ENCODE measurements at regions of chr10 and their contacts with region 1.

Region 1: DNA sequence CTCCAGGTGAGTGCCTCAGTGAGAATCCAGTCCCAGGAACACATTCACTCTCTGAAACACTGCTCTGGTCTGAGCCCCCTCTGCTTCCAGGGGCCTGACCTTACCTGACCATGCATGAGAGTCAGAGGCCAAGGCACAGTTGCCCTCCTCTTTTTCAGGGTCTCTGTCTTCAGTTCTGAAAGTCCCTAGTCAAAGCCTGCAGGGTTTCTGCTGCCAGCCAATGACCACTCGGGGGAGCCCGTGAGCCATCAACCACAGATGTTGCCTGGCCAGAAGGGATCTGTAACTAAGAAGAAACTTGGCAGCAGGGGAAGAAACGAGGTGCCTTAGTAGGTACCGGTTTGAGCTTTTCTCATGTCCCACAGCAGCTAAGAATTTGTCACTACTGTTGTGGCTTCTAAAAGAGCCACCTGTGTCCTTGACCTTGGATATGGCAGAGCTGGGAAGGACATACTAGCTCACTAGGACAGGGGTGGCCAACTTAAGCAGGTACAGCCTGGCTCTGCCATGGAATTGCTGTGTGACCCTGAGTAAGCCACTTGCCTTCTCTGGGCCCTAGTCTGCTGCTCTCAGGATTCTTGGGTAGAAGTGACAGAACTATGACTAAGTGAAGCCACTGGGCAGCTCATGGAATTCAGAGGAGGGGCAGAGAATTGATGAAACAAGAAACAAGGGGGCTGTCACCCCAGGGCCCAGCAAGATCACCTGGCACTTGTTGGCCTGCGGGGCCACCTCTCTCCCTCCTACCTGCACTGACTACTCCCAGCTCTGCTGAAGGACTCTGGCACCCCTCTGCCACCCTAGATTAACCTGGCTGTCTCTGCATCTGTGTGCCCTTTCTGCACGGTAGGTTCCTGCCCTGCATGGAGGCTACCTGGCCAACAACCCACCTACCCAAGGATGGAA is 83.8 kb upstream of the GPR26 start:
- DNase-seq: peak; percentile 48
- ATAC-seq: peak; percentile 89
- H3K4me3 ChIP-seq: no peak overlapping the region
- H3K27ac ChIP-seq: no peak overlapping the region
- H3K4me1 ChIP-seq: peaks cover 8% of the 10 kb centered on the region
- H3K27me3 ChIP-seq: peaks cover 28% of the 10 kb centered on the region
- CTCF ChIP-seq: peak; percentile 97

Region 2: GRCh38 chr10:123967396-123968243 is 385.3 kb after region 1 on chr10:
- CTCF ChIA-PET with region 1: interaction called, 4 read pairs
- POLR2A ChIA-PET with region 1: no interaction called
- in situ Hi-C with region 1: no loop called
- intact Hi-C with region 1: loop called (anchors 1 kb)
- DNase-seq: peak; percentile 38
- ATAC-seq: peak; percentile 86
- H3K4me3 ChIP-seq: no peak overlapping the region
- H3K27ac ChIP-seq: no peak overlapping the region
- H3K4me1 ChIP-seq: no peaks in the 10 kb centered on the region
- H3K27me3 ChIP-seq: peaks cover 10% of the 10 kb centered on the region
- CTCF ChIP-seq: peak; percentile 96